Activated CD4-positive, alpha-beta T cell treated with anti-CD3 and anti-CD28 coated beads for 36 hours (primary cell): ENCODE measurements at regions of chr9 and their contacts with region 1.

Region 1: GRCh38 chr9:72912476-72913381 is 40.1 kb downstream of the ALDH1A1 start:
- DNase-seq: no peak
- ATAC-seq: no peak
- H3K4me3 Mint-ChIP-seq: no peak overlapping the region
- H3K27ac Mint-ChIP-seq: no peak overlapping the region
- H3K4me1 Mint-ChIP-seq: no peaks in the 10 kb centered on the region
- H3K27me3 Mint-ChIP-seq: no peaks in the 10 kb centered on the region

Region 2: GRCh38 chr9:72882117-72882775 is 30.5 kb before region 1 on chr9:
- CTCF ChIA-PET with region 1: no interaction called
- POLR2A ChIA-PET with region 1: no interaction called
- intact Hi-C with region 1: loop called in 1 of 2 experiments (anchors 1 kb)
- DNase-seq: no peak
- ATAC-seq: no peak
- H3K4me3 Mint-ChIP-seq: no peak overlapping the region
- H3K27ac Mint-ChIP-seq: no peak overlapping the region
- H3K4me1 Mint-ChIP-seq: no peaks in the 10 kb centered on the region
- H3K27me3 Mint-ChIP-seq: no peaks in the 10 kb centered on the region